Adrenal gland (tissue), 19 donors: ENCODE measurements at regions of chr7 and their contacts with region 1.

Region 1: DNA sequence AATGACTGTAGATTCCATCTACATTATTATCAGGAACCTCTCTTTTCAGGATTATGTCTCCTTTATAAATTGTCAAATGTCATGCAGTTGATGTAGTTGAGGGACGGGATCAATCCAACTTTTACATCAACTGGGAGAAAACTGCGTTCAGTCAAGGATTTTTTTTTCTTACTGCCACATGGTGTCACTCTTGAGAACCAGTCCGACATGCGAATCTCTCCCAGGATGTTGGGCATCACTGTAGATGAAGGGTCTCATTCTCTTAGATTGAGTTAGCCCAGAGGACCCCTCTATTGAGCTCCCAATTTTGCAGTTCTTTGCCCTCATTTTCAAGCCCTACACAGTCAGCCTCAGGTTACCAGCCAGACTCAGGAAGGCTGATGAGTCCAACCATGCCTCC is 120.3 kb upstream of the PTPRZ1 start:
- DNase-seq: peak in 1 of 7 donors; percentile 2
- H3K4me3 ChIP-seq: no peak overlapping the region
- H3K27ac ChIP-seq: no peak overlapping the region
- H3K4me1 ChIP-seq: no peaks in the 10 kb centered on the region
- H3K27me3 ChIP-seq: no peaks in the 10 kb centered on the region
- CTCF ChIP-seq: peak in 4 of 6 experiments; percentile 14 to 29 (median 18)
- POLR2A ChIP-seq: no peak

Region 2: DNA sequence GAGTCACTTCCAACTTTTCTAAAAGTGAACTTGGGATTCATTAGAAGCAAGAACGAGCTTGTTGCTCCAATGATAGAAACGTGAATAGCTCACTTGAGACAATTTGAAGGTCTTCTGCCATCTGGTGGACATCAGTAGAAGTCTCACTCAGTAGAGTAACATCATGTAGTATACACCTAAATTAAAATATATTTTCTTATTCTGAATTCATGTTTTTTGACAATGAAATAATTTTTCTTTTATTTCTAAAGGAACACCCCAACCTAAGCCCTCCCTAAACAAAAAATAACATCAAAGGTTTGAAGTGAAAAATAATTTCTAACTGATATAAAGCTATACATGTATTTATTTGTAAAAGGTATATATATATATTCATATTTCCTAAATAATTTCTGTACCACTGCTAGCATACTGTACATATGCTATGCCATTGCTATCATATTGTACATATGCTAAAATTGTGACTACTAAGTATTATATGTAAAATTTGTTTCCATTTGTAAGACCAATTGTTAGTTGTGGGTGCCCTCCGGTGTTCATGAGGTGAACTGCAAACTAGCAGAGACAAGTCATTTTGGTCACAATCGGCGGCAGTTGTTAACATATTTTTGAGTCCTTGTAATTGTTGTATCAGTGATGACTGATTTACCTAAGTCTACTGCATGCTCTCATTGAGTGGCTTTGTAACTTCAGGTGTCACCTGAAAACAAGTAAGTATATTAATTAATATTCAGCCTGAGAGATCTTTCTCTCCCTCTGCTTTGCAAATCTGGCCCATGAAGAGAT is 242.1 kb after region 1 on chr7:
- intact Hi-C with region 1: loop called in 1 of 2 experiments (anchors 10 kb)
- DNase-seq: peak; percentile 49 to 82 (median 70)
- H3K4me3 ChIP-seq: no peak overlapping the region
- H3K27ac ChIP-seq: no peak overlapping the region
- H3K4me1 ChIP-seq: no peaks in the 10 kb centered on the region
- H3K27me3 ChIP-seq: no peaks in the 10 kb centered on the region
- CTCF ChIP-seq: peak; percentile 36 to 72 (median 56)
- POLR2A ChIP-seq: no peak